ENCODE measurements at regions of chr17 and their contacts with region 1.

Region 1: GRCh38 chr17:4789901-4790704 is 1.3 kb downstream of the GLTPD2 start:
- DNase-seq: peak; percentile 88
- H3K4me3 ChIP-seq: peak overlapping the region; percentile 10 to 65 (median 25)
- H3K27ac ChIP-seq: peak overlapping the region; percentile 14
- H3K4me1 ChIP-seq: peaks cover 24% of the 10 kb centered on the region
- H3K27me3 ChIP-seq: peaks cover 2 to 6% of the 10 kb centered on the region in 2 experiments
- CTCF ChIP-seq: peak; percentile 77 to 82
- POLR2A ChIP-seq: peak; percentile 88

Region 2: GRCh38 chr17:4709794-4710692 is 80.1 kb before region 1 on chr17 and contains the start of gene ARRB2:
- CTCF ChIA-PET with region 1: interaction called, 27 read pairs
- POLR2A ChIA-PET with region 1: interaction called, 3 read pairs
- dilution Hi-C with region 1: no loop called
- intact Hi-C with region 1: loop called (anchors 1 kb)
- DNase-seq: peak; percentile 99
- H3K4me3 ChIP-seq: peak within 1 kb of the TSS; percentile 58 to 84 (median 67)
- H3K27ac ChIP-seq: peak within 1 kb of the TSS; percentile 7
- H3K4me1 ChIP-seq: peaks cover 18% of the 10 kb centered on the region
- H3K27me3 ChIP-seq: no peaks in the 10 kb centered on the region
- CTCF ChIP-seq: peak; percentile 36 to 77
- POLR2A ChIP-seq: no peak
- total RNA-seq, gene ARRB2: 21.3 and 25.2 TPM in 2 replicates

Region 3: GRCh38 chr17:4744999-4745969 is 44.8 kb before region 1 on chr17:
- CTCF ChIA-PET with region 1: interaction called, 10 read pairs
- POLR2A ChIA-PET with region 1: no interaction called
- dilution Hi-C with region 1: no loop called
- intact Hi-C with region 1: loop called (anchors 1 kb)
- DNase-seq: no peak
- H3K4me3 ChIP-seq: no peak overlapping the region
- H3K27ac ChIP-seq: no peak overlapping the region
- H3K4me1 ChIP-seq: peaks cover 4% of the 10 kb centered on the region
- H3K27me3 ChIP-seq: peaks cover 2 to 10% of the 10 kb centered on the region in 2 experiments
- CTCF ChIP-seq: peak in 1 of 2 donors; percentile 8
- POLR2A ChIP-seq: no peak

Region 4: DNA sequence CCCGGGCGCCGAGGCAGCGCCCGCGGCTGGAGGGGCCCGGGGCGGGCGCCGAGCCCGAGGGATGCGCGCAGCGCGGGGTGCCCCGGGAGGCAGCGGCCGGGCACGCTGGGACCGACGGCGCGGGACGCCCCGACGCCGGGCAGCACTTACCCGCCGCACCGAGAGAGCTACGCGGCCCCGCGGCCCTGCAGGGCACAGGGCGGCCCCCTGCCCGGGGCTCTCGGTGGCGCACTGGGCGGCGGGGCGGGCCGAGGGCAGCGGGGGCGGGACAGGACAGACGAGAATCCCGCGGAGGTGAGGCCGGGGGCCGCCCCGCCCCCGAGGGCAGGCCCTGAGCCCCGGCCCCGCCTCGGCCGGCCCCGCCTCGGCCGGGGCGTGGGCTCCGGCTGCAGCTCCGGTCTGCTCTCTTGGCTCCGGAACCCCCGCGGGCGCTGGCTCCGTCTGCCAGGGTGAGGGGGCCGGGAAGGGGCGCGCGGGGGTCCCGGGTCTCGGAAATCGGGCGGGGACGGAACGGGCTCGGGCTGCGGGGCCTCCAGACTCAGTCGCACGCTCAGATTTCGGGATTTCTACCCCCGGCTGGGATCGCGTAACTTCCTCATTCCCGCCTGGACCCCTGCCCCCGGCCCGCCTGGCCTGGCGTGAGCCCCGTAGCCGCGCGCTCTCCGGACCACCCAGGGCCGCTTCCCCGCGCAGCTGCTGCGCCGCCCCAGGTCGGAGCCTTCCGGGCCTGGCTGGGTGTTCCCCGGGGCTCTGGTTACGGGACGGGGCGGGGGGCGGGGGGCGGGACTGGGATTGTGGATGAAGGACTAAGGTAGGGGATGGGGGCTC is 16.9 kb after region 1 on chr17 and contains the start of gene PLD2:
- CTCF ChIA-PET with region 1: interaction called, 14 read pairs
- POLR2A ChIA-PET with region 1: no interaction called
- dilution Hi-C with region 1: no loop called
- intact Hi-C with region 1: no loop called
- DNase-seq: peak; percentile 74
- H3K4me3 ChIP-seq: peak within 1 kb of the TSS; percentile 87 to 96 (median 91)
- H3K27ac ChIP-seq: no peak within 1 kb of the TSS
- H3K4me1 ChIP-seq: peaks cover 11% of the 10 kb centered on the region
- H3K27me3 ChIP-seq: no peaks in the 10 kb centered on the region
- CTCF ChIP-seq: no peak
- POLR2A ChIP-seq: peak; percentile 85
- total RNA-seq, gene PLD2: 52.3 and 58.7 TPM in 2 replicates

Region 5: GRCh38 chr17:4881761-4882555 is 91.9 kb after region 1 on chr17:
- CTCF ChIA-PET with region 1: interaction called, 61 read pairs
- POLR2A ChIA-PET with region 1: no interaction called
- dilution Hi-C with region 1: no loop called
- intact Hi-C with region 1: loop called (anchors 1 kb)
- DNase-seq: peak; percentile 52
- H3K4me3 ChIP-seq: no peak overlapping the region
- H3K27ac ChIP-seq: no peak overlapping the region
- H3K4me1 ChIP-seq: no peaks in the 10 kb centered on the region
- H3K27me3 ChIP-seq: no peaks in the 10 kb centered on the region
- CTCF ChIP-seq: peak; percentile 71 to 89
- POLR2A ChIP-seq: no peak

Region 6: DNA sequence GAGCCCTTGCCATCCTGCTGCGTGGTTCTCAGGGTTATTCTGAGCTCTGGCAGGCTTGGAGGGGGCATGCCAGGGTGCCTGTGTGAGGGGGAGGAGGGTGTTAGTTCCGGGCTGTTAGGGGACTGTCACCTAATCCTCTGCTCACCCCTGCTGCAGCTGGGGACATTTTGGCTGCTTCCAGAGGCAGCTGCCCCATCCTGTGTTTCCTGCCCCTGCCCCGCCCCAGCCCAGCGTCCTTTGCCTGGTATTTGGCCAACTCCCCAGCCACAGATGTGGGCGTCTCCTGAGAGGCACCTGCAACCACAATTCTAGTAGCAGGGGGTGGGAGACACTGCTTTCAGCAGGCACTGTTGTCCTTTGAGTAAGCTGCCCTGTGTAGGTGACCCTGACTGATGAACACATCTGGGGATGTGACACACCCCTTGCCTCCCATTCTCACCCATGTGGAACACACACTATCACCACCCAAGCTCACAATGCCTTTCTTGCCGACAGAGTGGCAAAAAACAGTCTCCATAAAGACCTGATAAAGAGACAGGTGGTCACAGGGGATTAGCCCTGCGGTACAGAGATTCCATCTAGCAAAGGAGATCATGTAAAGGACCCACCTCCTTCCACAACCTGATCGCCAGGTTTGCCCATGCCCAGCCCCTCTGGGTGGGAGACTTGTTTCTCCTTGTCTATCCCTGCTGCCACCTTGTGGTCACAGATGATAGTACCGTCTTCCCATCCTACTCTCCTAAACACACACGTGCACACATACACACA is 113.1 kb after region 1 on chr17 and contains the start of gene CHRNE:
- CTCF ChIA-PET with region 1: interaction called, 65 read pairs
- POLR2A ChIA-PET with region 1: no interaction called
- dilution Hi-C with region 1: no loop called
- intact Hi-C with region 1: loop called (anchors 5 kb)
- DNase-seq: peak; percentile 76
- H3K4me3 ChIP-seq: no peak within 1 kb of the TSS
- H3K27ac ChIP-seq: no peak within 1 kb of the TSS
- H3K4me1 ChIP-seq: peaks cover 10% of the 10 kb centered on the region
- H3K27me3 ChIP-seq: no peaks in the 10 kb centered on the region
- CTCF ChIP-seq: peak; percentile 63 to 77
- POLR2A ChIP-seq: no peak
- total RNA-seq, gene CHRNE: 0.76 and 0.84 TPM in 2 replicates

Measured in endothelial cell of umbilical vein (primary cell).